ENCODE measurements at regions of chr19 and their contacts with region 1.

Region 1: DNA sequence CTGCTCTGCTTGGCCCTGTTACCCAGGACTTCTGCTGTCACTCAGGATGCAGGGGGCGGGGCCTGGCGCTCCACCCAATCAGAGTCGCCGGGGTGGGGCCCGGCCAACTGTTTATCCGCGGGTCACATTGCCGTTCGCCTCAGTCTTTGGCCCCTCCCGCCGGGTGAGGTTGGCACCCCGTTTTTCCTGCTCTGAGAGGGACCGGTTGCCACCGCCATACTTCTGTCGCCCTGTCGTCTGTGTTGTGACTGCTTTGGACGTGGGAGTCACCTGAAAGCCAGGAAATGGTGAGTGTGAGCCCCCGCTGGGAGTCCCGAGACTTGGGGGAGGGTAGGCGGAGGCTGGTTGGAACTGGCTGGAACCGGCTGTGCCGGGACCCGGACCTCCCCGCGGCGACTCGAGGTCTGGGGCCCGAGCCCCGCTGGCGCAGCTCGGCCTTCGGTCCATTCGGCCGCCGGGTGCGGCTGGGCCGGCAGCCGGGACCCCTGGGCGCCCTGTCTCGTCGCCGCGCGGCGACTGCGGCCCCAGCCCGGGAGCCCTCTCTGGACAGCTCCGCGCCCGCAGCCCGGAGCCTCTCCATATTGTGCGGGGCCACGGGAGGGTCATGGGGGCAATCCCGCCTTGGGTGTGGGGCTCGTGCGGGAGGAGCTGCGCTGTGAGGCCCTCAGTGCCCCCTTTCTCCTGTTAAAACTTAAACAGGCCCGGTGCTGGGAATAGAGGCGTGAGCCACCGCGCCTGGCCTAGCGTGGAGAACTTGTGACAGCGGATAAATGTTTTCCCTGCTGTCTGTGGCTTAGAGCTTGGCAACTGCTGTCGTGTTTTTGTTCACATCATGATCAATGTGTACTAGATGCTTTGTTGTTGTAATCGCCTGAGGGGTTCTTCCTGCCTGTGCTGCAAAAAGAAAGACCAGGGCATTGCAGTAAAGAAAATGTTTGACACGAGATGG is at the start of gene ZNF844:
- H3K4me3 Mint-ChIP-seq: peak within 1 kb of the TSS; percentile 92
- H3K27ac Mint-ChIP-seq: peak within 1 kb of the TSS; percentile 96
- H3K4me1 Mint-ChIP-seq: peaks cover 21% of the 10 kb centered on the region
- H3K27me3 Mint-ChIP-seq: no peaks in the 10 kb centered on the region

Region 2: DNA sequence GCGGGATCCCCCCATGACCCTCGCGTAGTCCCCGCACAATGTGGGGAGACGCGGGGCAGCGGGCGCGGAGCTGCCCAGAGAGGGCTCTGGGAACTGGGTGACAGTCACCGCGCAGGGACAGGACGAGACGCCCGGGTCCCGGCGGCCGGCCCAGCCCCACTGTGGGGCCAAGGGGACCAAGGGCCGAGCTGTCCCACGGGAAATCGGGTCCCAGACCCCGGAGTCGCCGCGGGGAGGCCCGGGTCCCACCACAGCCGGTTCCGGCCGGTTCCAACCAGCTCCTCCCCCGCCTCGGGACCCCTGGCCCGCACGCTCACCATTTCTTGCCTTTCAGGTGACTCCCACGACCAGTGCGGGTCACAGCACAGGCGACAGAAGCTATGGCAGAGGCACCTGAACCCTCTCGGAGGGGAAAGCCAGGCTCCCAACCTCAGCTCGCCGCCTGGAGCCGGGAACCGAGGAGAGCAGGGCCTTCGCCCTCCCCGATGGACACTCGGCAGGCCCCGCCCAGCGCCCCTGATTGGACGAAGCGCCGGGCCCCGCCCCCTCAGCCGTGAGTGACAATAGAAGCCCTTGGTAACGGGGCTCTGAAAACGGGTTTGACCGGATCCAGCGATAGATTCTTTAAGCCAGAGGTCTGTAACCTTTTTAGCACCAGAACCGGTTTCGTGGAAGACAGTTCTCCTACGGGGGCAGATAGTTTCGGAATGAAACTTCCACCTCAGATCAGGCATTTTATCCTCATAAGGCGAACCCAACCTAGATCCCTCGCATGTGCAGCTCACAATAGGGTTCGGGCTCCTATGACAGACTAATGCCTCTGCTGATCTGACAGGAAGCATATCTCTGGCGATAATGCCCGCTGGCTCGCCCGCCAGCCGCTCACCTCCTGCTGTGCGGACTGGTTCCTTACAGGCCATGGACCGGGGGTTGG is 29.4 kb before region 1 on chr19 and contains the start of gene ZNF433:
- intact Hi-C with region 1: loop called (anchors 1 kb)
- H3K4me3 Mint-ChIP-seq: peak within 1 kb of the TSS; percentile 96
- H3K27ac Mint-ChIP-seq: peak within 1 kb of the TSS; percentile 87
- H3K4me1 Mint-ChIP-seq: peaks cover 26% of the 10 kb centered on the region
- H3K27me3 Mint-ChIP-seq: peaks cover 9% of the 10 kb centered on the region

Region 3: GRCh38 chr19:12092065-12092867 is 27.4 kb after region 1 on chr19:
- intact Hi-C with region 1: loop called (anchors 2 kb)
- H3K4me3 Mint-ChIP-seq: peak overlapping the region; percentile 84
- H3K27ac Mint-ChIP-seq: peak overlapping the region; percentile 81
- H3K4me1 Mint-ChIP-seq: peaks cover 14% of the 10 kb centered on the region
- H3K27me3 Mint-ChIP-seq: no peaks in the 10 kb centered on the region

Region 4: DNA sequence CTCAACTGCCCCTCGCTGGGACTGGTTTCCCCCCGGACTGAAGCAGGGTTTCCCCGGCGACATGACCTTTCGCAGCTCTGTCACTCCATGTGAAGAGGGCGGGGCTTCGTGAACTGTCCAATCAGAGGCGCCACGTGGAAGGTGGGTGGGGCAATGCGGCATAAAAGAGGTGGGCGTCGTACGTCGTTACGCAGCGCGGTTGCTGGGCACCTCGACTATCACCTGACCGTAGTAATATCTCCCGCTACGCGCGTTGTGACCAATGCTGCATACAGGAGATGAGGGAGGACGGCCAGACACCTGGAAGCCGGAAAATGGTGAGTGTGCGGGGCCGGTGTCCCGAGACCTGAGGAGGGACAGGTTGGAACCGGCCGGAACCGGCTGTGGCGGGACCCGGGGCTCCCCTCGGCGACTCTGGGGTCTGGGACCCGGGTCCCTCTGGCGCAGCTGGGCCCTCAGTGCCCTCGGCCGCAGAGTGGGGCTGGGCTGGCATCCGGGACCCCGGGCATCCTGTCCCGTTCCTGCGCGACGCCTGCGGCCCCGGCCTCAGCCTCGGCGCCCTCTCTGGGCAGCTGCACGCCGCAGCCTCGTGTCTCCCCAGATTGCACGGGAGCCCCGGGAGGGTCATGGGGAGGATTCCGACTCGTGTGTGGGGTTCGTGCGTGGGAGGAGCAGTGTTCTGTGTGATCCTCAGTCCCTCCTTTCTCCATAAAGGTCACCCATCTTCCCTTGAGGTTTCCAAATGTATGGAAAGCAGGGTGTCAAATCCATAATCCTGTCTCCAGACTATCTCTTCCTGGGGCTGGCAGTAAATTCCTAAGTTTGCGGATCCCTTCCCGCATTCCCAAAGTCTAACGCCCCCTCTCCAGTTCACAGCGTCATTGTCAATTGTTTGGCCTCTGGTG is 130.2 kb after region 1 on chr19:
- intact Hi-C with region 1: no loop called
- H3K4me3 Mint-ChIP-seq: peak overlapping the region; percentile 20
- H3K27ac Mint-ChIP-seq: no peak overlapping the region
- H3K4me1 Mint-ChIP-seq: peaks cover 15% of the 10 kb centered on the region
- H3K27me3 Mint-ChIP-seq: peaks cover 27% of the 10 kb centered on the region